Activated CD4-positive, alpha-beta memory T cell treated with anti-CD3 and anti-CD28 coated beads, Interleukin-2, amount 10 ng/mL, durations not matched to agents 7 days and 5 days (primary cell): ENCODE measurements at regions of chr2 and their contacts with region 1.

Region 1: DNA sequence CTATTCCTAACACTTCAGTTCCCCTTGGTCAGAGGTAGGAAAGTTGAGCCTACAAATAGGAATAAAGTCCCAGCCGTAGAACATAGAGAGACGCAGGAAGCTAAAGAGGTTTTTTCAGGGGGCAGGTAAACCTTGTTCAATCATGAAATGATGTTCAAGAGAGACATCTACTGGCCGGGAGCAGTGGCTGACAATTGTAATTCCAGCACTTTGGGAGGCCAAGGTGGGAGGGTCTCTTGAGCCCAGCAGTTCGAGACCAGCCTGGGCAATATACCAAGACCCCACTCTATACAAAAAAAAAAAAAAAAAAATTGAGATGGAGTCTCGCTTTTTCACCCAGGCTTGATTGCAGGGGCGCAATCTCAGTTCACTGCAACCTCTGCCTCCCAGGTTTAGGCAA is 66.7 kb upstream of the DNAJC10 start:
- DNase-seq: no peak
- H3K4me3 Mint-ChIP-seq: no peak overlapping the region
- H3K27ac Mint-ChIP-seq: no peak overlapping the region
- H3K4me1 Mint-ChIP-seq: peaks cover 29% of the 10 kb centered on the region
- H3K27me3 Mint-ChIP-seq: peaks cover 2% of the 10 kb centered on the region

Region 2: DNA sequence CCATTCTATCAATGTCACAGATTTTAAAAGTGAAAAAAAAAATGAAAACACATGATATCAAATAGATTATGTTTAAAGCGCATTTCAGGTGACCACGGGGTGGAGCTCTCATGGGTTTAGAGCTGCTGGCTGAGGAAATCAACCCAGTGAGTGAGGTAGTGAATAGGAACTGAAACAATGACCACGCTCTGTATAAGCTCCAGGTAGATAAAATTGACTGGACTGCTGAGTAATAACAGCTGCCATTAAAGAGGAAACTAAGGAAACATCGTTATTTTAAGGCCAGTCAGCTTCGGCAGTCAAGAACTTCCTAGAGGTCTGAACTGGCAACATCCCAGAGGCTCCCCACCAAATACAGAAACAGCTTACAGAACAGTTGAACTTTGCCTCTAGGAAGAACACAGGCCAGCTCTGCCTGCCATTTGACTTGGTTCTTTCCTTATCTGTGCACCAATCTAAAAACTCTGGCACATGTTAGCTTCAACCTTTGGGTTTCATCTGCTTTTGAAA is 408.4 kb before region 1 on chr2:
- CTCF ChIA-PET with region 1: interaction called, 15 read pairs
- POLR2A ChIA-PET with region 1: no interaction called
- DNase-seq: peak; percentile 25
- H3K4me3 Mint-ChIP-seq: no peak overlapping the region
- H3K27ac Mint-ChIP-seq: no peak overlapping the region
- H3K4me1 Mint-ChIP-seq: no peaks in the 10 kb centered on the region
- H3K27me3 Mint-ChIP-seq: no peaks in the 10 kb centered on the region

Region 3: GRCh38 chr2:182631299-182631698 is 18.0 kb before region 1 on chr2:
- CTCF ChIA-PET with region 1: no interaction called
- POLR2A ChIA-PET with region 1: no interaction called
- DNase-seq: no peak
- H3K4me3 Mint-ChIP-seq: no peak overlapping the region
- H3K27ac Mint-ChIP-seq: no peak overlapping the region
- H3K4me1 Mint-ChIP-seq: no peaks in the 10 kb centered on the region
- H3K27me3 Mint-ChIP-seq: peaks cover 19% of the 10 kb centered on the region